Heart left ventricle (tissue), 16 donors: ENCODE measurements at regions of chrX and their contacts with region 1.

Region 1: DNA sequence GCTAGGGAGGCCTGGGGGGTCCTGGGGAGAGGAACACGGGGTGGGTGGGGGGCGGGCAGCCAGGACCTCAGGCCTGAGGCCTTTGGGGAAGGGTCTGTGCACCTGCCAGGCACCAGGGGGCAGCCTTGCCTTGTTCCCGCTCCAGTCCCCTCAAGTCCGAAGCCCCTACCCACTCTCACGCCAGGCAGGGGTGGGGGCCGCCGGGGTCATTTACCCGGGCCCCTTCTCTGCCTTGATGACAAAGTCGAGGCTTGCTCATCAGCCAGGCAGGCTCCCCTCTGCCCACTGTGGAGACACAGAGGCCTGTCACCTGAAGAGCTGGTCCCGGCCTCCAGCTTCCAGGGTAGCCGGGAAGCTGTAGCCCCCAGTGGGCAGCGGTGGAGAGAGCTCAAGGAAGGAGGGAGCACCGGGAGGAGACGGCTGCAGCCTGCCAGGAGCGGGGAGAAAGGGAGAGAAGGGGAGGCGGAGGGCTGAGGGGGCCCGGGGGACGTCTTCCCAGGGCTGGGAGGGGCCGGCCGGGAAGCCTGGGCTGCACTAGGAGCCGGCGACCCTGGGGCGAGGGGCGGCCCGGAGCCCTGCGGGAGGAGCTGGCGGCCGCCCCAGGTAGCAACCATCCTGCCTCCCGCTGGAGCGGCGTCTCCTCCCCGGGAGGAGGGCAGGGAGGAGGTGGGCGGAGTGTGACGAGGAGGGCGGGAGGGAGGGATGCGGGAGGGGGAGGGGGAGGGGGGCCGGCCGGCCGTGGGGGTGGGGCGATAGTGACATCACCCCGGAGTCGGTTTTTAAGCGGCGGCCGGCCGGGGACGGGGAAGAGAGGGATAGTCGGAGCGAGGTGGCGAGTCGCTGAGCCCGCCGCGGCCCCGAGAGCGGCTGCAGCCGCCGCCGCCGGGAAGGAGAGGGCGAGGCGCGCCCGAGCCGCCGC is at the start of gene SLC6A8:
- DNase-seq: peak; percentile 78 to 89 (median 79)
- ATAC-seq: peak; percentile 43 to 69 (median 56)
- H3K4me3 ChIP-seq: peak within 1 kb of the TSS in 11 of 12 donors; percentile 20 to 69 (median 50)
- H3K27ac ChIP-seq: peak within 1 kb of the TSS; percentile 58 to 92 (median 80)
- H3K4me1 ChIP-seq: peaks cover 0 to 8% (median 0%) of the 10 kb centered on the region in 12 donors
- H3K27me3 ChIP-seq: peaks cover 0 to 18% (median 0%) of the 10 kb centered on the region in 9 donors
- CTCF ChIP-seq: peak in 11 of 12 donors; percentile 20 to 54 (median 36)
- POLR2A ChIP-seq: no peak
- total RNA-seq, gene SLC6A8: 113 to 203 (median 179) TPM

Region 2: GRCh38 chrX:153708415-153708814 is 21.0 kb after region 1 on chrX:
- intact Hi-C with region 1: loop called in 1 of 10 experiments (anchors 1 kb)
- DNase-seq: peak; percentile 56 to 75 (median 71)
- ATAC-seq: peak; percentile 61 to 75 (median 64)
- H3K4me3 ChIP-seq: no peak overlapping the region
- H3K27ac ChIP-seq: peak overlapping the region in 2 of 12 donors; percentile 12 to 83
- H3K4me1 ChIP-seq: peaks cover 0 to 22% (median 1%) of the 10 kb centered on the region in 12 donors
- H3K27me3 ChIP-seq: no peaks in the 10 kb centered on the region
- CTCF ChIP-seq: peak; percentile 25 to 70 (median 52)
- POLR2A ChIP-seq: no peak

Region 3: DNA sequence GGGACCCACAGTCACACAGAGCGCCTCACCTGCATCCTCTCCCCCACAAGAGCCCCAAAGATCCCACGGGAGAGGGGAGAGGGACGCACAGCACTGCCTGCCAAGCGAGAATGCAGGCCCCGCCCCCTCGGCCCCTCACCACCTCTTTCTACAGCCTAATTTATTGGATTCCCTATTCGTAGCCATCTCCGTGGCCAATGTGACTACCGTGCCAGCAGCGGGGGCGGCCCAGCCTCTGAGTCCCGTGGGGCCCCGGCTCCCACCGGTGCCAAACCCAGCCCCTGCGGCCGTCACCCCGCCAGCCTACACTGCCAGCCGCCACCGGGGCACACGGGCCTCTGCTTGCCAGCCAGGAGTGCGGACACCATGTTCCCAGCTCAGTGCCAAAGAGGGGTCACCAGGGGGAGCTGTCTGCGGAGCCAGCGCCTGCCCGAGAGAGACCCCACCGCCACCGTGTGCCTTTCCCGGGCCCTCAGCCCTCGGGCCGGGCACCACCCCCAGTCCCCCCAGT is 56.9 kb after region 1 on chrX:
- intact Hi-C with region 1: no loop called
- DNase-seq: no peak
- ATAC-seq: no peak
- H3K4me3 ChIP-seq: no peak overlapping the region
- H3K27ac ChIP-seq: peak overlapping the region in 1 of 12 donors; percentile 71
- H3K4me1 ChIP-seq: peaks cover 0 to 6% (median 0%) of the 10 kb centered on the region in 12 donors
- H3K27me3 ChIP-seq: peaks cover 0 to 7% (median 0%) of the 10 kb centered on the region in 9 donors
- CTCF ChIP-seq: peak in 4 of 12 donors; percentile 19 to 29 (median 23)
- POLR2A ChIP-seq: no peak